Activated CD4-positive, alpha-beta memory T cell treated with anti-CD3 and anti-CD28 coated beads for 36 hours (primary cell): ENCODE measurements at regions of chr4 and their contacts with region 1.

Region 1: DNA sequence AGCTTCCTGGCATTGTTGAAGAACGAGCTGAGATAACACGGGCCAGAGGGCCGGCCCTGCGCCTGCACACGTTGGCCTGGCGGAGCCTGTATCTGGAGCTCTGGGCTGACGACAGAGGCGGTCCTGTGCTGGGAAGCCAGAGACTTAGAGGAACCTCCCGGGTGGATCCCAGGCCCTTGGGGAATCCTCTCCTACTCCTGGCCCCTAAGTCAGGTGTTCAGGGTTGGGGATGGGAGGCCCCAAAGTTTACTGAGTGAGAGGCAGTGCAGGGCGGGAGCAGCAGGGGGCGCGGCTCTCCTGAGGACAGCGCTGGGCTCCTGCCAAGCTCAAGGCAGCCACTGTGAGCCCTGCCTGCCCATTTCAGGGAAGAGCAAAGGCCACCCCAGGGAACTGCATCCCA is 2.5 kb upstream of the HTRA3 start:
- DNase-seq: peak; percentile 58
- H3K4me3 Mint-ChIP-seq: no peak overlapping the region
- H3K27ac Mint-ChIP-seq: no peak overlapping the region
- H3K4me1 Mint-ChIP-seq: no peaks in the 10 kb centered on the region
- H3K27me3 Mint-ChIP-seq: peaks cover 29% of the 10 kb centered on the region

Region 2: GRCh38 chr4:8281519-8282133 is 14.5 kb after region 1 on chr4:
- CTCF ChIA-PET with region 1: no interaction called
- POLR2A ChIA-PET with region 1: no interaction called
- intact Hi-C with region 1: no loop called
- DNase-seq: no peak
- H3K4me3 Mint-ChIP-seq: no peak overlapping the region
- H3K27ac Mint-ChIP-seq: no peak overlapping the region
- H3K4me1 Mint-ChIP-seq: no peaks in the 10 kb centered on the region
- H3K27me3 Mint-ChIP-seq: no peaks in the 10 kb centered on the region

Region 3: DNA sequence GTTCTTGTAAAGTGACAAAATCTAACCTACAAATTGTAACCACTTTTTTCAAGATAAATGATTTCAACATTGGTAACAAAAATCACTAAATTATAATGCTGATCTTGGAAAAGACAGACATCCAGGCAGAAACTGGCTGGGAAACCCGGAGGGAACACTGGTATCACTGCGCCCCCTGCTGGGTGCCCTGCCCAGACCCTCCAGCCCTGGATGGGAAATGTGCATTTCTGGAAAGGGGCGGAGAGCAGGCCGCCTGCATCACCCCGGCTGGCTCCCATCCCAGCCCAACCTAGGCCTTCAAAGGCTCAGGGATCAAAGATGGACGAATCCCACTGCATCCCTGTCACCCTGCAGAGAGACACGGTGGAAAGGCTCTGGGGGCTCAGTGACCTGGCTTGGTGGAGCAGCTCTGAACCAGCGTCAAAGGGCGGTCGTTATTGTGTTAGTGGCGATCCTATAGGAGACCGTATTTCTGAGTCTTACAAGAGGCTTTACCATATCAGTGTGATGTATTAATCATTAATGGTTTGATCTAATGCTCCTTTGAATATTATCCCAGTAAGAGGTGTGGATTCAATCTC is 136.2 kb after region 1 on chr4:
- CTCF ChIA-PET with region 1: interaction called, 8 read pairs
- POLR2A ChIA-PET with region 1: no interaction called
- intact Hi-C with region 1: loop called (anchors 1 kb)
- DNase-seq: peak; percentile 63
- H3K4me3 Mint-ChIP-seq: no peak overlapping the region
- H3K27ac Mint-ChIP-seq: no peak overlapping the region
- H3K4me1 Mint-ChIP-seq: no peaks in the 10 kb centered on the region
- H3K27me3 Mint-ChIP-seq: no peaks in the 10 kb centered on the region